B cell (primary cell): ENCODE measurements at regions of chr5 and their contacts with region 1.

Region 1: GRCh38 chr5:40033411-40033810 is 608.6 kb upstream of the DAB2 start:
- DNase-seq: peak; percentile 94
- ATAC-seq: peak; percentile 98
- H3K4me3 ChIP-seq: peak overlapping the region in 1 of 5 experiments; percentile 20
- H3K4me3 Mint-ChIP-seq: peak overlapping the region; percentile 66
- H3K27ac ChIP-seq: peak overlapping the region; percentile 92
- H3K27ac Mint-ChIP-seq: peak overlapping the region; percentile 93
- H3K4me1 ChIP-seq: peaks cover 20 to 26% of the 10 kb centered on the region in 2 donors
- H3K4me1 Mint-ChIP-seq: peaks cover 31% of the 10 kb centered on the region
- H3K27me3 ChIP-seq: no peaks in the 10 kb centered on the region
- H3K27me3 Mint-ChIP-seq: no peaks in the 10 kb centered on the region
- CTCF ChIP-seq: no peak

Region 2: GRCh38 chr5:39998518-39998917 is 34.9 kb before region 1 on chr5:
- CTCF ChIA-PET with region 1: no interaction called
- POLR2A ChIA-PET with region 1: no interaction called
- intact Hi-C with region 1: no loop called
- DNase-seq: no peak
- ATAC-seq: no peak
- H3K4me3 ChIP-seq: no peak overlapping the region
- H3K4me3 Mint-ChIP-seq: no peak overlapping the region
- H3K27ac ChIP-seq: no peak overlapping the region
- H3K27ac Mint-ChIP-seq: no peak overlapping the region
- H3K4me1 ChIP-seq: no peaks in the 10 kb centered on the region
- H3K4me1 Mint-ChIP-seq: no peaks in the 10 kb centered on the region
- H3K27me3 ChIP-seq: no peaks in the 10 kb centered on the region
- H3K27me3 Mint-ChIP-seq: no peaks in the 10 kb centered on the region
- CTCF ChIP-seq: no peak

Region 3: GRCh38 chr5:40021007-40021406 is 12.4 kb before region 1 on chr5:
- CTCF ChIA-PET with region 1: interaction called, 13 read pairs
- POLR2A ChIA-PET with region 1: no interaction called
- intact Hi-C with region 1: no loop called
- DNase-seq: peak; percentile 50
- ATAC-seq: peak; percentile 57
- H3K4me3 ChIP-seq: no peak overlapping the region
- H3K4me3 Mint-ChIP-seq: no peak overlapping the region
- H3K27ac ChIP-seq: no peak overlapping the region
- H3K27ac Mint-ChIP-seq: no peak overlapping the region
- H3K4me1 ChIP-seq: peaks cover 5 to 6% of the 10 kb centered on the region in 2 donors
- H3K4me1 Mint-ChIP-seq: peaks cover 20% of the 10 kb centered on the region
- H3K27me3 ChIP-seq: no peaks in the 10 kb centered on the region
- H3K27me3 Mint-ChIP-seq: no peaks in the 10 kb centered on the region
- CTCF ChIP-seq: peak; percentile 57

Region 4: DNA sequence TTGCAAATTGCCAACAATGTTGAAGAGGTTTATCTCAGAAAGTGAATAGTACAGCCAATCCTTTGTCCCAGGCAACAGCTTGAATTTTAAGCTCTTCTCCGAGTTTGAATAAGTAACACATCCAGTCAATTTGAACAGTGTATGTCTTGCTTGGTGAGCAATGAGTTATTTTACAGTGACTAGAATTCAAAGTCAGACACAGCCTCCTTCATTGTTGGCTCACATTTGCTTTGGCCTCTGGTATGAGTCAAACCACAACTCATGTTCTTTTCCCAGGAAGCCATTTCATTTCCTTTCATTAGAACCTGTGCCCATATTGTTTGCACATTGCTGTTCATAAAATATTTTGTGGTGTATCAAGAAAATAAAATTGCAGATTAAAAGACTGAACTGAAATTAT is 13.4 kb after region 1 on chr5:
- CTCF ChIA-PET with region 1: no interaction called
- POLR2A ChIA-PET with region 1: no interaction called
- intact Hi-C with region 1: no loop called
- DNase-seq: no peak
- ATAC-seq: no peak
- H3K4me3 ChIP-seq: no peak overlapping the region
- H3K4me3 Mint-ChIP-seq: no peak overlapping the region
- H3K27ac ChIP-seq: no peak overlapping the region
- H3K27ac Mint-ChIP-seq: no peak overlapping the region
- H3K4me1 ChIP-seq: peaks cover 3 to 17% of the 10 kb centered on the region in 2 donors
- H3K4me1 Mint-ChIP-seq: peaks cover 20% of the 10 kb centered on the region
- H3K27me3 ChIP-seq: no peaks in the 10 kb centered on the region
- H3K27me3 Mint-ChIP-seq: no peaks in the 10 kb centered on the region
- CTCF ChIP-seq: no peak

Region 5: DNA sequence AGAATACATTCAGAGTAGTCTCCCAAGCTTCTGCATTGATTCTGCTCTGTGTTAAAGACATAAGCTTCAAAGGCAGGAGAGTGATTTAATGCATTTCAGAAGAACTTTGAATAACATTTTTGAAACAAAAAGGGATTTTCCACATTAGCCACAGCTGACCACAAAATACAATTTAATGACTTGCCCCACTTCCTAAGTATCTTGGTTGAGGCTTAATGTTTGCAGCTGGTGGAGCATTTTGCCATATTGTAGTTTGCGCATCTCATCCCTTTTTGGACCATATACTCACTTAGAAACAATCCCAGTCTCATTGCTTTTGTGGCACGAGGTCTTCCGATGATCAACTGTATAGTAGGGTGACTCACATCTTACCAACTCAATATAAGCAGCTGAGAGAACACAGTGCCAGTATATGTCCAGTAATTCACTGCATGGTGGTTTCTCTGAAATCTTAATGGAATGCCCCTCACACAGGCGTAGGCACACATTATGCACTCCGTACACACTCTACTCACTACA is 190.5 kb after region 1 on chr5:
- CTCF ChIA-PET with region 1: no interaction called
- POLR2A ChIA-PET with region 1: no interaction called
- intact Hi-C with region 1: loop called (anchors 1 kb)
- DNase-seq: peak; percentile 33
- ATAC-seq: peak; percentile 11
- H3K4me3 ChIP-seq: no peak overlapping the region
- H3K4me3 Mint-ChIP-seq: peak overlapping the region; percentile 62
- H3K27ac ChIP-seq: no peak overlapping the region
- H3K27ac Mint-ChIP-seq: no peak overlapping the region
- H3K4me1 ChIP-seq: peaks cover 14 to 26% of the 10 kb centered on the region in 2 donors
- H3K4me1 Mint-ChIP-seq: peaks cover 34% of the 10 kb centered on the region
- H3K27me3 ChIP-seq: peaks cover 0 to 6% (median 2%) of the 10 kb centered on the region in 4 experiments
- H3K27me3 Mint-ChIP-seq: peaks cover 25% of the 10 kb centered on the region
- CTCF ChIP-seq: no peak

Region 6: GRCh38 chr5:40386289-40386688 is 352.9 kb after region 1 on chr5:
- CTCF ChIA-PET with region 1: no interaction called
- POLR2A ChIA-PET with region 1: no interaction called
- intact Hi-C with region 1: loop called (anchors 10 kb)
- DNase-seq: peak; percentile 52
- ATAC-seq: peak; percentile 57
- H3K4me3 ChIP-seq: no peak overlapping the region
- H3K4me3 Mint-ChIP-seq: no peak overlapping the region
- H3K27ac ChIP-seq: no peak overlapping the region
- H3K27ac Mint-ChIP-seq: no peak overlapping the region
- H3K4me1 ChIP-seq: peaks cover 36 to 43% of the 10 kb centered on the region in 2 donors
- H3K4me1 Mint-ChIP-seq: peaks cover 45% of the 10 kb centered on the region
- H3K27me3 ChIP-seq: no peaks in the 10 kb centered on the region
- H3K27me3 Mint-ChIP-seq: no peaks in the 10 kb centered on the region
- CTCF ChIP-seq: no peak

Region 7: DNA sequence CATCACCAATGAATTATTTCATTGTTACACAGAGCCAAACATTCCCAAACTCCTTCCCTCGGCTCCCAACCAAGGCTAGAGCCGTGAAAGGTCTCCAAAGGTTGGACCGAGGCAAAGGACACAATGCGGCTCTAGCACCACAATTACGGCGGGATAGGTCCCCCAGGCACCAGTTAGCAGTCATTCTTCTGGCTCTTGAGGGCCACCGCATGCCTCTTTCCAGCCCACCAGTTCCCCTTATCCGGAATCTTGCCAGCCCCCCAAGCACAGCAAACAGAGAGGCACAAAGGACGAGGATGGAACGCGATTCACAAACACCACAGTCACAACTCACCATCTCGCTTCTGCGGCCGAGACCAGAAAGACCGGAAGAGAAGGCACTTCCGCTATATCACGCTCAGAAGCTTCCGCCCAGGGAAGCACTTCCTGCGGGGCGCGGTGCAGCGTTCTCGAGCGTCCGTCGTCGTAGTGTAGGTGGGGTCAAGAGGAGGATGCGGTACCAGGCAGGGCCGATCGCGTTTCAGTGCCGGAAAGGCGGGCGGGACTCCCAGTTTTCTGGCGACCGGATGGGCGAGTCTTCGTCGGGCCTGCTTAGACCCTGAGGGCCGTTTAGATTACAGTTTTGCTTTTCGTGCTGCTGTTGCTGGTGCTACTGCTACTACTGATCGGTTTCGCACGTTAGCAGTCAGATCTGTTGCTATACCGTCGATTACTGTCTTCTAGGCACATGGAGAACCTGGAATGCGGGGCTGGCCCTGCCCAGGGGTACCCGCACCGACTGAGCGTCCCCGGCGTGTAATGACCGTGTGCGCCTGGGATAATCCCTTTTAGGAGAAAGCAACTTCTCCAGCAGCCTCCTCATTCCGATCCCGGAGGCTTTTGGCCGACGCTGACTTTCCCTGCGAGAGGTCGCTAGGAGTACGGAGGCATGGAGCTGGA is 801.7 kb after region 1 on chr5 and contains the start of gene RPL37:
- CTCF ChIA-PET with region 1: no interaction called
- POLR2A ChIA-PET with region 1: no interaction called
- intact Hi-C with region 1: loop called (anchors 10 kb)
- DNase-seq: peak; percentile 95
- ATAC-seq: peak; percentile 98
- H3K4me3 ChIP-seq: peak within 1 kb of the TSS; percentile 74 to 99 (median 89)
- H3K4me3 Mint-ChIP-seq: peak within 1 kb of the TSS; percentile 99
- H3K27ac ChIP-seq: peak within 1 kb of the TSS; percentile 85 to 91
- H3K27ac Mint-ChIP-seq: peak within 1 kb of the TSS; percentile 98
- H3K4me1 ChIP-seq: peaks cover 21 to 23% of the 10 kb centered on the region in 2 donors
- H3K4me1 Mint-ChIP-seq: peaks cover 43% of the 10 kb centered on the region
- H3K27me3 ChIP-seq: no peaks in the 10 kb centered on the region
- H3K27me3 Mint-ChIP-seq: no peaks in the 10 kb centered on the region
- CTCF ChIP-seq: no peak
- total RNA-seq, gene RPL37: 1,932 and 2,240 TPM in 2 replicates